ENCODE measurements at regions of chr22 and their contacts with region 1.

Region 1: DNA sequence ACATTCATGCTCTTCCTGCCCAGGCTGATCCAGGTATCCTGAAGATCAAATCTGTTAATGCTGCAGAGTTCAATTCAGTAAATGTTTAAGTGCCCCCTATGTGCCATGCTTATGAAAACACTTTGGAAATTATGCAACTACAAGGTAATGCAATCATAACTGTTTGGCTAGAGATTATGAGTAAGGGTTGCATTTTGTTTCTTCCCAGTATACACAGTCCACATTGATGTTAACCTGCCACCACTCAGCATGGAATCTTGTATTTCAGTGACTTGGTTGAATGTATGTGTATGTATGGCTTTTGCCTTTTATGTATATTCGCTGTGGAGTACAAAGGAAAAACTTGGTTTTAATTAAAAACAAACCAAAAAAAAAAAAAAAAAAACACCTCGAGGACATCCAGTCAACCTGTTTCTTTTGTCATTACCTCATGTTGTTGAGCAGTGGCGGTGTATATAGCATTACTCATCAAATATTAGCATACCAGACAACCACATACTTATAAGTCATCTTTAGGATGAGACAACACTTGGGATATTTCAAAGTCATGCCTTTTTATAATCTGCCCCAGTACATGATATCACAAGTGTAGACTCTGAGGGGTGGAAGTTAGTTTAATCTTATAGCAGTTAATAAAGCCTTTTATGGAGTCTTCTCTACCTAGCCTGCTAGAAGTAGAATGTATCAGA is 86.1 kb upstream of the HORMAD2 start:
- DNase-seq: peak; percentile 26
- H3K4me3 ChIP-seq: no peak overlapping the region
- H3K27ac ChIP-seq: peak overlapping the region; percentile 47
- H3K4me1 ChIP-seq: peaks cover 15% of the 10 kb centered on the region
- H3K27me3 ChIP-seq: no peaks in the 10 kb centered on the region
- CTCF ChIP-seq: no peak
- POLR2A ChIP-seq: no peak

Region 2: GRCh38 chr22:29670626-29671025 is 323.5 kb before region 1 on chr22:
- CTCF ChIA-PET with region 1: no interaction called
- POLR2A ChIA-PET with region 1: no interaction called
- dilution Hi-C with region 1: no loop called
- intact Hi-C with region 1: no loop called
- DNase-seq: no peak
- H3K4me3 ChIP-seq: no peak overlapping the region
- H3K27ac ChIP-seq: no peak overlapping the region
- H3K4me1 ChIP-seq: no peaks in the 10 kb centered on the region
- H3K27me3 ChIP-seq: no peaks in the 10 kb centered on the region
- CTCF ChIP-seq: no peak
- POLR2A ChIP-seq: no peak

Region 3: GRCh38 chr22:29837780-29838598 is 156.2 kb before region 1 on chr22 and contains the start of gene ASCC2:
- CTCF ChIA-PET with region 1: no interaction called
- POLR2A ChIA-PET with region 1: no interaction called
- dilution Hi-C with region 1: no loop called
- intact Hi-C with region 1: loop called (anchors 5 kb)
- DNase-seq: peak; percentile 97
- H3K4me3 ChIP-seq: peak within 1 kb of the TSS; percentile 79 to 92 (median 86)
- H3K27ac ChIP-seq: peak within 1 kb of the TSS; percentile 63
- H3K4me1 ChIP-seq: peaks cover 15% of the 10 kb centered on the region
- H3K27me3 ChIP-seq: no peaks in the 10 kb centered on the region
- CTCF ChIP-seq: no peak
- POLR2A ChIP-seq: peak; percentile 88
- total RNA-seq, gene ASCC2: 60.4 and 60.7 TPM in 2 replicates

Region 4: GRCh38 chr22:30183861-30184278 is 189.7 kb after region 1 on chr22:
- CTCF ChIA-PET with region 1: no interaction called
- POLR2A ChIA-PET with region 1: no interaction called
- dilution Hi-C with region 1: no loop called
- intact Hi-C with region 1: no loop called
- DNase-seq: no peak
- H3K4me3 ChIP-seq: no peak overlapping the region
- H3K27ac ChIP-seq: no peak overlapping the region
- H3K4me1 ChIP-seq: peaks cover 5% of the 10 kb centered on the region
- H3K27me3 ChIP-seq: peaks cover 12 to 18% of the 10 kb centered on the region in 2 experiments
- CTCF ChIP-seq: no peak
- POLR2A ChIP-seq: no peak